Heart right ventricle (tissue), 16 donors: ENCODE measurements at regions of chr16 and their contacts with region 1.

Region 1: GRCh38 chr16:23608194-23608593 is 12.1 kb upstream of the NDUFAB1 start:
- DNase-seq: peak in 1 of 2 donors; percentile 9
- ATAC-seq: peak in 1 of 8 donors; percentile 16
- H3K4me3 ChIP-seq: no peak overlapping the region
- H3K27ac ChIP-seq: peak overlapping the region in 1 of 10 donors; percentile 50
- H3K4me1 ChIP-seq: peaks cover 0 to 11% (median 0%) of the 10 kb centered on the region in 9 donors
- H3K27me3 ChIP-seq: no peaks in the 10 kb centered on the region
- CTCF ChIP-seq: no peak

Region 2: DNA sequence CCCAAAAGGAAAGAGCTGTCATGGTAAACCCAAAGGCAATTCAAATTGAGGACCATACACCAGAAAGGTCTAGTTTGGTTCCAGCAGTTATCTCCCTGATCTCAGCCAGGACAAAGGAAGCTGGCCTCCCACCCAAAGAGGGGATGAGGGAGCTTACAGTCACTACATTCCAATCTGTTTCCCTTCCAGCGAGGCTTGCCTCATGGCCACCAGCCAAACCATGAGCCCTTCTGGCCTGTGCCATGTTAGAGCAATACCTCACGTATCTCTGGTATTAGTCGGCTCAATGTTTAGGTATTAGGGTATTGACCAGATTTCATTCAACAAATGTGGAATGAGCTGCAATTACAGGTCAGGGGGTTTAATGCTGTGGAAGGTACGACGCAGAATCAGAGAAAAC is 20.5 kb before region 1 on chr16:
- intact Hi-C with region 1: no loop called
- DNase-seq: peak in 1 of 2 donors; percentile 30
- ATAC-seq: peak in 4 of 8 donors; percentile 44 to 62 (median 51)
- H3K4me3 ChIP-seq: no peak overlapping the region
- H3K27ac ChIP-seq: peak overlapping the region in 3 of 10 donors; percentile 1 to 25 (median 15)
- H3K4me1 ChIP-seq: peaks cover 0 to 45% (median 15%) of the 10 kb centered on the region in 9 donors
- H3K27me3 ChIP-seq: no peaks in the 10 kb centered on the region
- CTCF ChIP-seq: no peak

Region 3: GRCh38 chr16:23668225-23668624 is 60.0 kb after region 1 on chr16:
- intact Hi-C with region 1: loop called in 1 of 10 experiments (anchors 10 kb)
- DNase-seq: no peak
- ATAC-seq: no peak
- H3K4me3 ChIP-seq: no peak overlapping the region
- H3K27ac ChIP-seq: no peak overlapping the region
- H3K4me1 ChIP-seq: peaks cover 0 to 2% (median 0%) of the 10 kb centered on the region in 9 donors
- H3K27me3 ChIP-seq: no peaks in the 10 kb centered on the region
- CTCF ChIP-seq: no peak

Region 4: DNA sequence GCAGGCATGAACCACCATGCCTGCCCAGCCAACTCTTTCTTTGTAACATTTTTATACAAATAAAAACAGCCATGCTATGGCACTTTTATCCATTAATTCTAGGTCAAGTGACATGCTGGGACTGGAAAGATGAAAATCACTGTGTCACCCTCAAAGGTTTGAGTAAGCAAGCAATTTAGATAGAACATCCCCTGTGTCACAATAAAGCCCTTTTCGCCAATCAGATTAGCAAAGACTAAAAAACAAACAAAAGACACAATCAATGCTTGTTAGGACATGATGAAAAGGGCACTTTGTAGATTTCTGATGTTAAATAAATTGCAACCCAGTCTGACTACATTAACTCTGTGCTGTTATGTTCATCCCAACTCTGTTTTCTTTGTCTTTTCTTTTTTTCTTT is 173.0 kb after region 1 on chr16:
- intact Hi-C with region 1: no loop called
- DNase-seq: no peak
- ATAC-seq: no peak
- H3K4me3 ChIP-seq: no peak overlapping the region
- H3K27ac ChIP-seq: no peak overlapping the region
- H3K4me1 ChIP-seq: no peaks in the 10 kb centered on the region
- H3K27me3 ChIP-seq: peaks cover 0 to 64% (median 21%) of the 10 kb centered on the region in 7 donors
- CTCF ChIP-seq: no peak